ENCODE measurements at regions of chr15 and their contacts with region 1.

Region 1: DNA sequence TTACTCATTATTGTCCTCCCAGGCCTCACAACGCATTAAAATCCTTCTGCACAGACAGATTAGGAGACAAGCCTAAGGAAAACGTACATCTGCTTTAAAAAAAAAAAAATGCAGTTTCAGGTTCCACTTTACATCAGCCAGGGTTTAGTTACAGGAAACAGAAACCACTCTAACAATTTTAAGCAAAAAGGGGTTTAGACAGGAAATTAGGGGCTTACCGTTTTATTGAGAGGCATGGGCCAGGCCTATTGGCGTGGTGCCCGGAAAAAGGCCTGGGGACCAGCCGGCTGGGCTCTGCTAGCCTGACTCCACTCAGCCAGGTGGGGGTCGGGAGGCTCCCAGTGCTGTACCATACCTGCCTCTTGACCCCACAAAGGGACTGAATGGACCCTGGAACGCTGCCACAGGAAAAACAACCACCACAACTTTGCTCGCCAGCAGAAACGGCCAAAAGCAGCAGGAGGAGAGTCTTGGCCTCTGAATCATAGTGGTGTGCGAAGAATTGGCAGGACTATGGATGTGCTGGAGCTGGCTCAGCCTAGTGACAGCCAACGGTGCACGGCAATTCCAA is 124.3 kb downstream of the CHSY1 start:
- DNase-seq: peak in 4 of 5 donors; percentile 15 to 27 (median 24)
- H3K4me3 ChIP-seq: peak overlapping the region; percentile 6 to 12
- H3K4me3 Mint-ChIP-seq: peak overlapping the region; percentile 44 to 73 (median 57)
- H3K27ac ChIP-seq: peak overlapping the region; percentile 51
- H3K27ac Mint-ChIP-seq: peak overlapping the region; percentile 79 to 96 (median 93)
- H3K4me1 ChIP-seq: peaks cover 26% of the 10 kb centered on the region
- H3K4me1 Mint-ChIP-seq: peaks cover 29 to 45% (median 41%) of the 10 kb centered on the region in 4 donors
- H3K27me3 ChIP-seq: no peaks in the 10 kb centered on the region
- H3K27me3 Mint-ChIP-seq: peaks cover 0 to 3% of the 10 kb centered on the region in 2 donors

Region 2: GRCh38 chr15:100373120-100373896 is 754.3 kb before region 1 on chr15:
- CTCF ChIA-PET with region 1: no interaction called
- POLR2A ChIA-PET with region 1: no interaction called
- intact Hi-C with region 1: loop called (anchors 5 kb)
- DNase-seq: no peak
- H3K4me3 ChIP-seq: no peak overlapping the region
- H3K4me3 Mint-ChIP-seq: peak overlapping the region in 4 of 8 donors; percentile 21 to 79 (median 64)
- H3K27ac ChIP-seq: no peak overlapping the region
- H3K27ac Mint-ChIP-seq: no peak overlapping the region
- H3K4me1 ChIP-seq: no peaks in the 10 kb centered on the region
- H3K4me1 Mint-ChIP-seq: peaks cover 4 to 10% (median 5%) of the 10 kb centered on the region in 4 donors
- H3K27me3 ChIP-seq: no peaks in the 10 kb centered on the region
- H3K27me3 Mint-ChIP-seq: peaks cover 28 to 38% of the 10 kb centered on the region in 2 donors

Region 3: DNA sequence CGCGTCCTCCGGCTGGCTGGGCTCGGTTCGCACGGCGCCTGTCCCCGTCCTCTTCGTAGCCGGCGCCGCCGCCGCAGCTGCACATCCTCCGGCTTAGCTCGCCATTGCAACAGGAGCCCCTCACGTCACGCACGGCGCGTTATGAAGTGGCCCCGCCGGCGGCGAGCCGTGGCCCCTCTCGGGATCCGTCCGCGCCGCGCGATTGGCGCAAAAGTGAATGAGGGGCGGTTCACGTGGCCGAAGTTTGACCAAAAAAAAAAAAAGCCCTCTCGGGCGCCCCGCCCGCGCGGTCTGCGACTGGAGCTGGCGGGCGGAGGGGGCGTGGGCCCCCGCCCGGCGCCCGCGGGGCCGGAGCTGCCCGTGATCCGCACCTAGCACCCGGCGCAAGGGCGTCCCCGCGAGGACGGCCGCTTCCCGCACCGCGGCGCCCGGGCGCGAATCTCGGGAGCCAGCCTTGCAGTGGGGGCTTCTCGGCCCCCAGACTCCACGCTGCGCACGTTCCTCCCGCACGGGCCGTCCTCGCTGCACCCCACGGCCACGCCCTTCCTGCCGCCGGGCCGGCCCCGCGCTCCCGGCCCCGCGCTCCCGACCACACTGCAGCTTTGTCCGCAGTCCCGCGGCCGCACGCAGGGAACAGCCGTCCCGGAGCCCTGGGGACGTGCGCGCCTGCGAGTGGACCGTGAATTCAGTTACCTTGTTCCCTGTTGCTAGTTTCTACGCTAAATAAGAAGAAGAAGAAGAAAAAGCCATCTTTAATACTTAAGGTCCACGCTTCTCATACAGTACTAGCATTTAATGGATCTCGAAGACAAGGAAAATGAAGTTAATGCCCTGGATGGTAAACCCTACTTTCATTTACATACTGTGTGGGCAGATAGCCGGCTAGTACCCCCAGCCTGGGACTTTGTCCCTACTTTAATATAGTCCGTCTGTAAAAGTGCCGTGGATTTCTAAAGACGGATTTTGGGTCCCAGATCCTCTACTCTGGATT is 124.5 kb after region 1 on chr15 and contains the start of gene CHSY1:
- CTCF ChIA-PET with region 1: interaction called, 10 read pairs
- POLR2A ChIA-PET with region 1: interaction called, 13 read pairs
- intact Hi-C with region 1: loop called (anchors 5 kb)
- DNase-seq: peak; percentile 81 to 90 (median 86)
- H3K4me3 ChIP-seq: peak within 1 kb of the TSS; percentile 30 to 66
- H3K4me3 Mint-ChIP-seq: peak within 1 kb of the TSS; percentile 94 to 96 (median 95)
- H3K27ac ChIP-seq: peak within 1 kb of the TSS; percentile 42
- H3K27ac Mint-ChIP-seq: peak within 1 kb of the TSS; percentile 90 to 95 (median 93)
- H3K4me1 ChIP-seq: peaks cover 39% of the 10 kb centered on the region
- H3K4me1 Mint-ChIP-seq: peaks cover 29 to 43% (median 31%) of the 10 kb centered on the region in 4 donors
- H3K27me3 ChIP-seq: no peaks in the 10 kb centered on the region
- H3K27me3 Mint-ChIP-seq: no peaks in the 10 kb centered on the region
- total RNA-seq, gene CHSY1: 11.1 to 11.9 TPM

Measured in CD4-positive, alpha-beta memory T cell (primary cell).